HCT116 (cell line): ENCODE measurements at regions of chr6 and their contacts with region 1.

Region 1: DNA sequence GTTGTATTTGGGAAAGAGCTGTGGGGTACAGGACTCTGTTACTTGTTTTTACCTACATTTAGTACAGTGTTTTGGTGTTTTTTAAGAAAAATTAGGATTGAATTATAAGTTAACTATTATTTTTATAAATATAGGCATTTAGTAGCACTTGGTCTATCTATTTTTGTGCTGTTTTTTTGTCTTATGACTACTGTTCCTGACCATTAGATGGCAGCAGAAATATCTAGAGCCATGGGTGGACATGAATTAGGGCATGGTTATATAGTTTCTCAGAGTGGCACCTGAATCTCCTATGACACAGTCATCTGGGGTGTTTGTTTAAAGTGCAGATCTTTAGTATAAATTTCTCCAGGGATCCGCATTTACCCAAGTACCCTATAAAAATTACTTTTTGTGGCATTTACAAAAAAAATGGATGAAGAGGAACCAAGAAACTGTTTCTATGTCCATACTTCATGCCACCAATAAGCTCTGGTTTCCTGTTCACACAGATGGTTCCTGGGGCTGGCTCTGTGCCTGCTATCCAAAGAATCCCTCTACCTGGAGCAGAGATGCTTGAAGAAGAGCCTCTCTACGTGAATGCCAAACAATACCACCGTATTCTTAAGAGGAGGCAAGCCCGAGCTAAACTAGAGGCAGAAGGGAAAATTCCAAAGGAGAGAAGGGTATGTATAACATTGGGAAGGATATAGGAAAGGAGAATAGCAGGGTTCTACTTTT is 19.8 kb downstream of the NFYA start:
- DNase-seq: no peak
- ATAC-seq: peak; percentile 70
- H3K4me3 ChIP-seq: no peak overlapping the region
- H3K27ac ChIP-seq: no peak overlapping the region
- H3K4me1 ChIP-seq: no peaks in the 10 kb centered on the region
- H3K27me3 ChIP-seq: no peaks in the 10 kb centered on the region
- CTCF ChIP-seq: peak; percentile 41 to 45 (median 44); a peak in 4 of 6 replicates
- POLR2A ChIP-seq: no peak
- RAD21 ChIP-seq: peak; percentile 44

Region 2: GRCh38 chr6:41182069-41183034 is 89.8 kb after region 1 on chr6:
- CTCF ChIA-PET with region 1: interaction called, 18 read pairs
- POLR2A ChIA-PET with region 1: no interaction called
- RAD21 ChIA-PET with region 1: interaction called in 1 of 2 experiments, 4 read pairs
- intact Hi-C with region 1: loop called (anchors 1 kb)
- DNase-seq: peak; percentile 59
- ATAC-seq: peak; percentile 99
- H3K4me3 ChIP-seq: no peak overlapping the region
- H3K27ac ChIP-seq: no peak overlapping the region
- H3K4me1 ChIP-seq: peaks cover 0 to 4% of the 10 kb centered on the region in 2 experiments; a peak in 1 of 4 replicates
- H3K27me3 ChIP-seq: 0 out of 2 replicates have a peak, but pooled peaks cover under 1% of the 10 kb centered on the region
- CTCF ChIP-seq: peak; percentile 70 to 82 (median 77)
- POLR2A ChIP-seq: no peak
- RAD21 ChIP-seq: peak; percentile 67